HepG2 (cell line): ENCODE measurements at regions of chr12 and their contacts with region 1.

Region 1: GRCh38 chr12:52156736-52157565 is 34.9 kb downstream of the KRT80 start:
- DNase-seq: peak; percentile 41
- ATAC-seq: peak; percentile 89
- H3K4me3 ChIP-seq: no peak overlapping the region
- H3K27ac ChIP-seq: no peak overlapping the region
- H3K4me1 ChIP-seq: no peaks in the 10 kb centered on the region
- H3K27me3 ChIP-seq: no peaks in the 10 kb centered on the region
- CTCF ChIP-seq: peak; percentile 97
- EP300 ChIP-seq: no peak
- POLR2A ChIP-seq: no peak
- RAD21 ChIP-seq: peak; percentile 88

Region 2: DNA sequence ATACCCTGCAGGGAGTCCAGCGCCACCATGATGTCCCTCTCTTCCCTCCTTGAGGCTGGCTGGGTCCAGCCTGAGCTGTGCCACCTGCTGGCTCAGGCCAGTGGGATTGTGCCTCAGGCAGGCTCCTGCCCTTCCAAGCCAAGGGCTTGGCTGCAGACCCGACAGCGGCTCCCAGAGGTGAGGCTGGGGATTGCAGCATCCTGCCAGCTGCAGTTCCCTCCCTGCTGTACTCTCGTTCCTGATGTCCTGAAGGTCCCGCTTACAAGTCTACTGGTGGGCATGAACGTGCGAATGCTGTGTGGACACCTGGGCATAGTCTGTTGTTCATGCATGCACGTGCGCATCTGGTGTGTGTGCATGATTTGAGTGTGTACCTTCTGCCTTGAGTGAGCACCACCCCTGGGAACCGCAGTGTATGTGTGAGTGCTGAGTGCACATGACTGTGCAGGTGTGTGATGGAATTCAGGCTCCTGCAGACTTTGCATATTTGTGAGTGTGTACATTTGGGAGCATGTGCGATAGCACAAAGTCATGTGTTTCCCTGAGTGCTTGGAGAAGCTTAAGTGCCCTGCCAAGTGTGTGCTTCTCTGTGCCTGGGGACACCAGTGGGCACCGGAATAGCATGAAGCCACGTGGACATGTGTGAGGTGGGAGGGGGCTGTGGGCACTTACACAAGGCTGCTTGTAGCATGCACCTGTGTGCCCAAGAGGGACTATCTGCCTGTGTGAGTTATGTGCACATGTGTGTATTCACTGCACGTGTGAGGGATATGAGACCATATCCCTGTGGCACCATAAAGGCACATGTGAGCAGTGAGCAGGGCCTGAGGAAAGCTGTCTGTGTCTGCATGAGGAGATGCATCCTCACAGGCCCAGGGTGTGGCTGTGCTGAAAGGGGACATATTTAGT is 56.8 kb after region 1 on chr12:
- CTCF ChIA-PET with region 1: interaction called, 21 read pairs
- POLR2A ChIA-PET with region 1: no interaction called
- in situ Hi-C with region 1: no loop called
- intact Hi-C with region 1: no loop called
- DNase-seq: peak; percentile 57
- ATAC-seq: peak; percentile 95
- H3K4me3 ChIP-seq: no peak overlapping the region
- H3K27ac ChIP-seq: no peak overlapping the region
- H3K4me1 ChIP-seq: no peaks in the 10 kb centered on the region
- H3K27me3 ChIP-seq: peaks cover 10 to 22% of the 10 kb centered on the region in 2 experiments; a peak in 3 of 5 replicates
- CTCF ChIP-seq: peak; percentile 89
- EP300 ChIP-seq: no peak
- POLR2A ChIP-seq: no peak
- RAD21 ChIP-seq: peak; percentile 91

Region 3: DNA sequence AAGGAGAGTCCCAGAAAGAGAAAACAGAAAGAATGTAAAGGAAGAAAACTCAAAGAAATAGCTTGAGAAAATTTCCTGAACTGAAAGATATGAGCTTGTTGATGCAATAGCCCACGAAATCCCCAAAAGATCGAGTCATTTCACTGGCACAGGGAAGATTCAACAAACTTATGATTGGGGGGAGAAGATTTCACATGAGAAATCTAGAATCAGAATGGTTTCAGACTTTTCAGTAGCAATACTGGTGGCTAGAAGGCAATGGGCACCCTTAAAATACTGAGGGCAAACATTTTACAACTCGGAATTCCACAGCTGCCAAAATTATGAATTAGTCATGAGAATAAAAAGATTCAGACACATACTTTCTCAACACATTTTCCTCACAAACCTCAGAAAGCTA is 67.2 kb after region 1 on chr12:
- CTCF ChIA-PET with region 1: no interaction called
- POLR2A ChIA-PET with region 1: no interaction called
- in situ Hi-C with region 1: no loop called
- intact Hi-C with region 1: no loop called
- DNase-seq: no peak
- ATAC-seq: no peak
- H3K4me3 ChIP-seq: no peak overlapping the region
- H3K27ac ChIP-seq: no peak overlapping the region
- H3K4me1 ChIP-seq: peaks cover 5% of the 10 kb centered on the region; the same call in 1 of the 2 replicates
- H3K27me3 ChIP-seq: peaks cover 0 to 9% of the 10 kb centered on the region in 2 experiments; a peak in 2 of 5 replicates
- CTCF ChIP-seq: no peak
- EP300 ChIP-seq: no peak
- POLR2A ChIP-seq: no peak
- RAD21 ChIP-seq: no peak

Region 4: GRCh38 chr12:52300796-52301691 is 144.1 kb after region 1 on chr12:
- CTCF ChIA-PET with region 1: no interaction called
- POLR2A ChIA-PET with region 1: no interaction called
- in situ Hi-C with region 1: no loop called
- intact Hi-C with region 1: no loop called
- DNase-seq: no peak
- ATAC-seq: no peak
- H3K4me3 ChIP-seq: no peak overlapping the region
- H3K27ac ChIP-seq: no peak overlapping the region
- H3K4me1 ChIP-seq: no peaks in the 10 kb centered on the region
- H3K27me3 ChIP-seq: peaks cover 0 to 7% of the 10 kb centered on the region in 2 experiments; a peak in 1 of 5 replicates
- CTCF ChIP-seq: no peak
- EP300 ChIP-seq: no peak
- POLR2A ChIP-seq: no peak
- RAD21 ChIP-seq: no peak

Region 5: DNA sequence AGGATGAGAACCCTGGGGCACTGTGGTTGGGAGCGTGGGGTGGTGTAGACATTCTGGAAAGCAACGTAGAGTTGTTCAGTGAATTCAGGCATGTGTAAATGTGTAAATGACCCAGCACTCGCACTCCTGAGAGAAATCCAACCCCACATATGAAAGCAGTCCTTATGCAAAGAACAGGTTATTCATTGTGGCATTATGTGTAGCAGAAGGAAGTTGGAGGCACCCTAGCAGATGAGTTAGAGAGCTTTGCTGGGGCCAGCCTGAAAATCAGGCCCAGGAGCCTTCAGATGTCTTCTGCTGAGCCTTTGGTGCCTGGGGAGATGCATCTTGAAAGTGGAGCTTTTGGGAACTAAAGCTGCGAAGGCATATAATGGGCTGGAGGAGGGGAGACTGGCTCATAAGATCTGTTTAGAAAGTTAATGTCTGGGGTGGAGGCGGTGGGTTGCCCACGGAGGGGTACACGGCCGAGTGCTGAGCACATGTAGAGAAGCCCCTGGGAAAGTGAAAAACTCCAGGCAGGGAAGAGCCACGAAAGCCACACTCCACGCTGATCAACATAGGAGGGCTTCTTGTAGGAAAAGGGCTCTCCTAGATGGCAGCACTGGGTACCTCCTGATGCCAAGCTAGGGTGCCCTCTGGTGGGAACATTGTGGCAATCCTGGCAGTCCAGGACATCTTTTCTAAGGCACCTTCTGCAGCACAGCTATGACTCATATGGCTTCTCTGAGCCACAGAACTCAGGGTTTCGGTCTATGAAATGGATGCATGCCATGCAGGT is 170.3 kb after region 1 on chr12:
- CTCF ChIA-PET with region 1: interaction called, 45 read pairs
- POLR2A ChIA-PET with region 1: no interaction called
- in situ Hi-C with region 1: no loop called
- intact Hi-C with region 1: loop called (anchors 1 kb)
- DNase-seq: peak; percentile 78
- ATAC-seq: peak; percentile 97
- H3K4me3 ChIP-seq: no peak overlapping the region
- H3K27ac ChIP-seq: no peak overlapping the region
- H3K4me1 ChIP-seq: no peaks in the 10 kb centered on the region
- H3K27me3 ChIP-seq: peaks cover 3 to 13% of the 10 kb centered on the region in 2 experiments; a peak in 3 of 5 replicates
- CTCF ChIP-seq: peak; percentile 84
- EP300 ChIP-seq: no peak
- POLR2A ChIP-seq: no peak
- RAD21 ChIP-seq: peak; percentile 76

Region 6: DNA sequence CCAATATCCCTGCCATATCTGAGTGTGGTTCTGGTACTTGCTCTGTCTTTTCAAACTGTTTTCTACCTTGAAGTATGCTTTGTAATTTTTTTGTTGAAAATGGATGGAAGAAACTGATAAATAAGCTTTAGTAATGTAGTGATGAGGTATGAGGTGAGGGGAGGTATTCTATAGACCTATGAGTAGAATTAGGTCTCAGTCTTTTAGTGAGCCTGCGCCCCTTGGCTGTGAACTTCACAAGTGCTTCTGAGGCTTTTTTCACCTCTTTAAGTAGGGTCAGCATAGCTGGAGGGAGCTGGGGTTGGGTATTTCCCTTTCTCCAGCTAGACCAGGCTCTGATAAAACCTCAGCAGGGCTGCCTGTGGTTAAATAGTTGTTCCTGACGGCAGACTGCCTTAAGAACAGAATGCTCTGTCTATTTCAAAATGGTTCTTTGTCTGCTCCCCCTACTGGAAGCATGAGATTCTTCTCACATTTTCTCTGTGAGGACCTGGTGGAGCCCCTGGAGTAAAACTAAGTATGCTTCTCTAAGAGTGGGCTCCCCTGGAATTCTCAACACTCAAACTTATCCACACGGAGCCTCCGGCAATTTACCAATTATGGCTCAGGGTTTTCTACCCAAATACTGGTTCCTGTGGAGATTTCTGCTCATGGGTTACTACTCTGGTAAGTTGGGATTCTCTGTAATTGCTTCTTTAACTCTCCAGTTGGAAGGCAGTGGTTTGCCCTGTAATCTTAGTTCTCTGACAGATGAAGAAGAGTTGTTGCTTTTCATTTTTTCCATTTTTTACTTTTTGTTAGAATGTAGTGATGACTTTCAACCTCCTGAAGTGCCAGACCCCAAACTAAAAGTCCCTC is 350.1 kb after region 1 on chr12:
- CTCF ChIA-PET with region 1: no interaction called
- POLR2A ChIA-PET with region 1: no interaction called
- in situ Hi-C with region 1: no loop called
- intact Hi-C with region 1: loop called (anchors 2 kb)
- DNase-seq: peak; percentile 17
- ATAC-seq: peak; percentile 78
- H3K4me3 ChIP-seq: no peak overlapping the region
- H3K27ac ChIP-seq: no peak overlapping the region
- H3K4me1 ChIP-seq: no peaks in the 10 kb centered on the region
- H3K27me3 ChIP-seq: no peaks in the 10 kb centered on the region
- CTCF ChIP-seq: peak; percentile 49
- EP300 ChIP-seq: no peak
- POLR2A ChIP-seq: no peak
- RAD21 ChIP-seq: no peak